ENCODE measurements at regions of chr10 and their contacts with region 1.

Region 1: GRCh38 chr10:24383681-24384106 is 174.8 kb downstream of the KIAA1217 start:
- DNase-seq: peak; percentile 78
- H3K4me3 Mint-ChIP-seq: peak overlapping the region; percentile 12
- H3K27ac Mint-ChIP-seq: peak overlapping the region; percentile 74
- H3K4me1 Mint-ChIP-seq: peaks cover 13% of the 10 kb centered on the region
- H3K27me3 Mint-ChIP-seq: peaks cover 23% of the 10 kb centered on the region

Region 2: DNA sequence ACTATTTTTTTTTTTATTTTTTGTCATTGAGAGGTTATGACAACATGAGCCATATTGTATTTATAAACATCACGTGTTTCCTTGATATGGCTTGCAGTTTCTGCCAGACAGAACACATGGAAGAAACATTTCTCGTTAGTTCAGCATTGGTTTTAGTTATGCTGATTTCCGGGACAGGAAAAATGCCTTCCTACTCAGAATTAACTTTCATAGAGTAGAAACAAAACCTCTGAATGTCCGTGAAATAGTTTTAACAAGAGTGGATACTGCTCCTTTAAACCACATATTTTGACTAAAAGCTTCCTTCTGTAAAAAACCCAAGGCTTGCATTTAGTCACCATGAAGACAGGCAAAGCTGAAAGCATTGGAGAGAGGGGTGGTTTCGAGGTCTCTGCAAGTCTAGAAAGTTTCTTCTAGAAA is 65.6 kb after region 1 on chr10:
- CTCF ChIA-PET with region 1: interaction called, 4 read pairs
- POLR2A ChIA-PET with region 1: interaction called, 4 read pairs
- intact Hi-C with region 1: loop called (anchors 1 kb)
- DNase-seq: no peak
- H3K4me3 Mint-ChIP-seq: no peak overlapping the region
- H3K27ac Mint-ChIP-seq: no peak overlapping the region
- H3K4me1 Mint-ChIP-seq: peaks cover 28% of the 10 kb centered on the region
- H3K27me3 Mint-ChIP-seq: peaks cover 16% of the 10 kb centered on the region

Region 3: GRCh38 chr10:24569828-24570657 is 186.3 kb after region 1 on chr10:
- CTCF ChIA-PET with region 1: no interaction called
- POLR2A ChIA-PET with region 1: no interaction called
- intact Hi-C with region 1: no loop called
- DNase-seq: no peak
- H3K4me3 Mint-ChIP-seq: no peak overlapping the region
- H3K27ac Mint-ChIP-seq: no peak overlapping the region
- H3K4me1 Mint-ChIP-seq: no peaks in the 10 kb centered on the region
- H3K27me3 Mint-ChIP-seq: peaks cover 31% of the 10 kb centered on the region

Region 4: GRCh38 chr10:25059764-25060389 is 676.2 kb after region 1 on chr10:
- CTCF ChIA-PET with region 1: no interaction called
- POLR2A ChIA-PET with region 1: no interaction called
- intact Hi-C with region 1: loop called (anchors 5 kb)
- DNase-seq: no peak
- H3K4me3 Mint-ChIP-seq: no peak overlapping the region
- H3K27ac Mint-ChIP-seq: no peak overlapping the region
- H3K4me1 Mint-ChIP-seq: peaks cover 20% of the 10 kb centered on the region
- H3K27me3 Mint-ChIP-seq: no peaks in the 10 kb centered on the region

Measured in activated CD4-positive, alpha-beta memory T cell treated with anti-CD3 and anti-CD28 coated beads for 36 hours (primary cell).